ENCODE measurements at regions of chr12 and their contacts with region 1.

Region 1: DNA sequence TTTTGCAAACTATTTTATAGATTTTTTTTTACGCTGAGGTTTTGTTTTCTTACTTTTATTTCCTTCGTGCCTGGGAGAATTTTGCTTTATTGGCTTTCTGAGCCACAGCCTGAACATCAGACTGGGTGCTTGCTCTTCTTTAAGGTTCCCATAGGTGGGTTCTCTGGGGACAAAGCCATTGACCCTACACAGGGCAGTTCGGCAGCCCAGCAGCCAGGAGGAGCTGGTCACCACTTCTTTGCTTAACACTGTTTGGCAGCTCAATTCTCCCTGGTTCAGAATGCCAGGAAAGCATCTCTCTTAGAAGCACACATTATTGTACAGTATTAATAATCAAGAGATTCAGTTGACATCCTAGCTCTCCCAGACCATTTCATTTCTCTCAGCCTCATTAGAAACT is 140.8 kb upstream of the NEDD1 start:
- DNase-seq: peak; percentile 31

Region 2: GRCh38 chr12:96457191-96457930 is 308.9 kb before region 1 on chr12:
- in situ Hi-C with region 1: no loop called
- DNase-seq: no peak

Region 3: DNA sequence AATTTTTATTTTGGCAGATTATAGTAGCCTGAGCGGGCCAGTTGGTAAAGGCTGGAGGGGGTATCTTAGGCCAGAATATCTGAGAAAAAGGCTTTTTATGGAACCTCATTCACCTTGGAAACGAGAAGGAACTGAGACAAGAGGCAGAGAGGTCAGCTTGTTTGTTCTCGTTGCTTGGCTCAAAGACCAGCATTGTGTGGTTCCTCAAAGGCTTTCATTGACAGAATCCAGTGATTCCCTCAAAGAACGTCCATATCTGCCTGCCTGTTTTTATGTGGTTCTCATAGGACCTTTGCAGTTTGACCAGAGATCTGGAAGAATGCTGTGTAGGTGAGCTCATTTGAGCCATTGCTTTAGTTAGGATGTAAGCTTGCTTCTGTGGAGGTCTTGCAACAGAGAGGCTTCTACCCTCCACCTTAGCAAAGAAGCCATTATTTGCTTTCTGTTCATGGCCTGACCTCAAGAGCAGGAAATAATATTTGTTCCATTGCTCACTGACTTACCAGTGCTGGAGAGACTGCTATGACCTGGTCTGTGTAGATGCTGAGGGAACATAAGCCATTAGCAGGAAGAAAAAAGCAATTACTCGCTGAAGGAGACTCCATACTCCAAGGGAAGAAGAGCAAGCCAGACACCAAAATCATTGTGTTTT is 159.5 kb before region 1 on chr12:
- in situ Hi-C with region 1: no loop called
- DNase-seq: no peak

Region 4: GRCh38 chr12:96658124-96658725 is 108.0 kb before region 1 on chr12:
- in situ Hi-C with region 1: loop called (anchors 25 kb)
- DNase-seq: no peak

Region 5: DNA sequence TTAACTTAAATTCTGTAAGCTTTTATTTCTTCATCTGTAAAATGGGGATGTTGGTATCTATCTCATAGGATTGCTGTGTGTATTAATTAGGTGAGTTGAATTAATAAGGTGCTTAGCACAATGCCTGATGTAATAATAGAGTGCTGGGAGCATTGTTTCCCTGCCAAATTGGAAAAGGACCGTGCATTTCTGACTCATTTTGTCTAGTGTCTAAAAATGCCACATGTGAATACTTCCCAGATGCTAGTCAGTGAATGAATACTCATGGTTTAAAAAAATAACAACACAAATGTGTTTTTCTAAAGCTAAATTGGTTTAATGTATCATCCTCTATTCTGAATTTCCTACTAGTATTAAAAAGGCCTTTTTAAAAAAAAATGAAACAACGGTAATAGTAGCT is 95.4 kb after region 1 on chr12:
- in situ Hi-C with region 1: no loop called
- DNase-seq: no peak